ENCODE measurements at regions of chr17 and their contacts with region 1.

Region 1: DNA sequence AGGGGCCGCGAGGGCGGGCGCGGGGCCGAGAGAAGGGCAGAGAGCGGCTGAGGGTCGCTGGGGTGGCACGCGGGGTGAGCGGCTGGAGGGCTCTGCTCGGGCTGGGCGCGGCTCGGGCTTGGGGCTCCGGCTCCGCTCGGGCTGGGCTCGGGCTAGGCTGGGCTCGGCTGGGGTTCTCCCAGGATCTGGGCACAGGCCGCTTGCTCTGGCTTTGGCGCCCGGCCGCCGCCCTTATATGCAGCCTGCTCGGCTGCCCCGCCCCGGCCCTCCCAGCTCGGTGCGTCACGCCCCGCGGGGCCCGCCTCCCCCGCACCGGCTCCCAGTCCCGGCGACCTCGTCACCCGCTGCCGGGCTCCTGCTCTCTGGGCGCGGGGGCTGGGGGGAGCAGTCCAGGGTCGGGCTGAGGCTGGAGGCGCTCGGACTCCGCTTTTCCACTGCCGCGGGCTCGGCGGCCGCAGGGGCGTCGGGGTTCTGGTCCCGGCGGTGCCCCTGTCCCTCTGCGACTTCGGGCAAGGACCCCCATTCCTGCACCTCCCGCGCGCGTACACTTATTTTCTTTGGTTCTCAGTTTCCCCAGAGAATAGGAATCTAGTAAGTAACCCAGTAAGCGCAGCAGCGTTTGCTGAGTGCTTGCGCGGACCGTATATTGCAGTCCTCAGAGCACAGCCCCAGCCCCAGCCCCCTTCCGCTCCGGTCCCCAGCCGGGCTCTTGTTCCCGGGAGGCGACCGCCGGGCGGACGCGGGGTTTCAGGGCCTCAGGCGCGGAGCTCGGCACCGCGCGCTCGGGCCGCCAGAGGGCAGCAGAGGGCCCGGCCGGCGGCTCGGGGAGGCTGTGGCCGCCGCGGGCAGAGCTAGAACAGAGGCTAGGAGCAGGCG is at the start of gene RASD1:
- DNase-seq: peak; percentile 95
- H3K4me3 Mint-ChIP-seq: peak within 1 kb of the TSS; percentile 77
- H3K27ac Mint-ChIP-seq: peak within 1 kb of the TSS; percentile 72
- H3K4me1 Mint-ChIP-seq: peaks cover 11% of the 10 kb centered on the region
- H3K27me3 Mint-ChIP-seq: peaks cover 21% of the 10 kb centered on the region
- total RNA-seq, gene RASD1: 6.6 and 7.5 TPM in 2 replicates

Region 2: GRCh38 chr17:17356149-17356930 is 140.1 kb before region 1 on chr17:
- intact Hi-C with region 1: loop called (anchors 1 kb)
- DNase-seq: peak; percentile 90
- H3K4me3 Mint-ChIP-seq: no peak overlapping the region
- H3K27ac Mint-ChIP-seq: no peak overlapping the region
- H3K4me1 Mint-ChIP-seq: no peaks in the 10 kb centered on the region
- H3K27me3 Mint-ChIP-seq: peaks cover 23% of the 10 kb centered on the region

Region 3: GRCh38 chr17:17462048-17462824 is 34.2 kb before region 1 on chr17:
- intact Hi-C with region 1: no loop called
- DNase-seq: no peak
- H3K4me3 Mint-ChIP-seq: no peak overlapping the region
- H3K27ac Mint-ChIP-seq: no peak overlapping the region
- H3K4me1 Mint-ChIP-seq: no peaks in the 10 kb centered on the region
- H3K27me3 Mint-ChIP-seq: peaks cover 9% of the 10 kb centered on the region

Region 4: DNA sequence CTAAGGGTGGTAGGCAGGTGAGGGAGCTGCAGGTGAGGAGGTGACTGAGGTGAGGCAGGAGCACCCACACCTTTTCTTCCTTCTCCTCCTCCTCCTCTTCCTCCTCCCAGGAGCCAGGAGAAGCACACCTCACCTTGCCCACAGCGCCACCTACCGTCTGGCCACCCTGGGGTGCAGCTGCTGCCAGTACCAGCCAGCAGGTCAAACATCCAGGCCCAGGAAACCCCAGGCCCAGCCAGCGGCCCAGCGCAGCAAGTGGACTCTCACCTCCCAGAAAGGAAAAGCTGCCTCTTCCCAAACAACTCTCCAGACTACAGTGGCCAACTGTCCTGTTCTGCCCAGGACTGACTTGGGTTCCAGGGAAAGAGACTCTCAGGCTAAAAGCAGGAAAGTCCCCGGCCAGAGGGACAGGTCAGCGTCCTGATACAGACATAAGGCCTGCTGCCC is 72.3 kb after region 1 on chr17:
- intact Hi-C with region 1: loop called (anchors 5 kb)
- DNase-seq: peak; percentile 88
- H3K4me3 Mint-ChIP-seq: no peak overlapping the region
- H3K27ac Mint-ChIP-seq: no peak overlapping the region
- H3K4me1 Mint-ChIP-seq: no peaks in the 10 kb centered on the region
- H3K27me3 Mint-ChIP-seq: no peaks in the 10 kb centered on the region

Region 5: DNA sequence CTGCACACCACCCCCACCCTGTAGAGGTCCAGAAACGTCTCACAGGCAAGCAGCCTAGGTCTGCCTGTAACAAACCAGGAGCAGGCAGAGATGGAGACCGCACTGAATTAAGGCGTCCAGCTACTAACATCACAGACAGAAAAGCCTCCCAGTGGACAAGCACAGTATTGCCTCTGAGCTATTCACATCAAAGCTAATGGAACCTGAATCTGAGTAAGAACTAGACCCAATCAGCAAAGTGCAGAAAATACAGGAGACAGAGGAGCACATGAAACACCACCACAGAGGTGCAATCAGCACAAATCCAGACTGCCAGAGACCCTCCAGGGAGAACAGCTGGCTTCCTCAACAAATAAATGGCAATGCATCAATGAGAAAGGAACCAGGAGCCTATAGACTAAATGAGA is 117.3 kb after region 1 on chr17:
- intact Hi-C with region 1: loop called (anchors 2 kb)
- DNase-seq: peak; percentile 84
- H3K4me3 Mint-ChIP-seq: no peak overlapping the region
- H3K27ac Mint-ChIP-seq: no peak overlapping the region
- H3K4me1 Mint-ChIP-seq: peaks cover 2% of the 10 kb centered on the region
- H3K27me3 Mint-ChIP-seq: no peaks in the 10 kb centered on the region

Region 6: DNA sequence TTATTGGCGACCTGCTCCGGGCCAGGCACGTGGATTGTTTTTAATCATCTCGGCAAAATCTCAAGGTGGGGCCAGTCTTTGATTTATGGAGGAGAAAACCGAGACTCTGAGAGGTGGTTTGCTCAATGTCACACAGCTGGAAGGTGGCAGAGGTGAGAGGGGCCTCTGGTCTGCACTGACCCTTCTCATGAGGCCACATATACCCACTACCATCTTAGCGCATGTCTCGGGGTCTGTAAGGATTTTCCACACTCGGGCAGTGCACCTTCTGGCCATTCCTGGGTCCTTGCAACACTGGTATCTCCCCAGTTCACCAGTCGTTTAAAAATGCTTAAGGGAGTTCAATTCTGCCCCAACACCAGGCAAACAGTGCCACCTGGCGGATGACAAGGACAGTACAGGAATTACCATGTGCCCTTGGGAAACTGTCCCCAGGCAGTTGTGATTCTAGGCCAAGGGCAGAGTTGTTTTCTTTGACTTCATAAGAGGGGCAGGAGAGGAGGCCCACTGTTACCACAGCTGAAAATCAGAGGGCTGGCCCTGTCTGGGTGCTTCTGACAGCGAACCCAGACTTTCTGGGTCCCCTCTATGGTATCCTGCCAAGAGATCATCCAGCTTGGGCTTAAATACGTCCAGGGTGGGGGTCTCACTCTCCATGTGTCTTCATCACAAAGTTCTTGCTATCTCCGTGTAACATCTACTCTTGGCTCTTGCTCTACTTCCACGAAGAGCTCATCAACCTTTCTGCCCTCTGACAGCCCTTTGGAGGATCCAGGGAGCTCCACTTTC is 145.4 kb after region 1 on chr17:
- intact Hi-C with region 1: loop called (anchors 1 kb)
- DNase-seq: peak; percentile 93
- H3K4me3 Mint-ChIP-seq: no peak overlapping the region
- H3K27ac Mint-ChIP-seq: no peak overlapping the region
- H3K4me1 Mint-ChIP-seq: peaks cover 1% of the 10 kb centered on the region
- H3K27me3 Mint-ChIP-seq: no peaks in the 10 kb centered on the region

Measured in activated CD4-positive, alpha-beta T cell treated with anti-CD3 and anti-CD28 coated beads, Interleukin-2, amount 10 ng/mL, durations not matched to agents 24 days and 14 days (primary cell).